Tibial artery (tissue), 4 donors: ENCODE measurements at regions of chr5 and their contacts with region 1.

Region 1: DNA sequence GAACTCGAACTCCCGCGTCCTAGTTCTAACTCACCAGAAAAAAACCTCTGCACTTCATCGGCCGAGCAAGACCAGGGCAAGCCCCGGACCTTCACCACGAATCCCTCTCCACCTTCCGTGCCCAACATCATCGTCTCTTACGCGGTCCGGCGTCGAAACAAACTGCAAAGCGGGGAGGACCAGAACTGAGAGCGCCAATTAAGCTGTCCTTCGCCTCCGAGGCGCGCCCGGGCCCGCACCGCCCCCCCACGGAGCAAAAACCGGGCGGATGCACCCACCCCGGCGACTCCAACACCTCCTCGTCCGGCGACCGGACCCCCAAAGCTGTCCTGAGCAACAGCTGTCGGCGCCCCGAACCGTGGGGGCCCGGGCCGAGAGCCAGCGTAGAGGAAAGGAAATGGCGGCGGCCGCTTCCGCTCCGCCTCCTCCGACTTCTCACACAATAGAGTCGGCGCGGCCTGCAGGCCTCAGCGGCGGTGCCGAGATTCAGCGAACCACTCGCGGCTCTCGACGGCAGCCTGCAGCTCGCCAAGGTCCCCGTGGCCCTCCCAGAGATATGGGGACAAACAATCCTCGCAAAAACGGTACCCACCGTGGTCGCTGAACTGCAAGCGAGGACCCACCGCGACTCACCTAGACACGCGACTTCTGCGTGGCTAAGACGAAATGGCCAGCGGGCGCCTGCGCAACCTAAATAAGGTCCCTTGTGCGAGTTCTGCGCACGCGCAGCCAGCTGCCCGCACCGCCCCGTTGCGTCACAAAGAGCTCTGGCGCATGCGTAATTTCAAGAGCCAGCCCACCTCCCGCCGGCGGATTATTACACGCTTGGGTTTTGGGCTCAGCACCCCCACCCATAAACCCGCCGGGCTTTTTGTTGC is at the start of gene HNRNPH1:
- DNase-seq: peak; percentile 97 to 99
- H3K4me3 ChIP-seq: peak within 1 kb of the TSS; percentile 94 to 99
- H3K27ac ChIP-seq: peak within 1 kb of the TSS; percentile 99 to 100
- H3K4me1 ChIP-seq: peaks cover 0 to 54% (median 44%) of the 10 kb centered on the region in 4 donors
- H3K27me3 ChIP-seq: no peaks in the 10 kb centered on the region
- CTCF ChIP-seq: no peak

Region 2: DNA sequence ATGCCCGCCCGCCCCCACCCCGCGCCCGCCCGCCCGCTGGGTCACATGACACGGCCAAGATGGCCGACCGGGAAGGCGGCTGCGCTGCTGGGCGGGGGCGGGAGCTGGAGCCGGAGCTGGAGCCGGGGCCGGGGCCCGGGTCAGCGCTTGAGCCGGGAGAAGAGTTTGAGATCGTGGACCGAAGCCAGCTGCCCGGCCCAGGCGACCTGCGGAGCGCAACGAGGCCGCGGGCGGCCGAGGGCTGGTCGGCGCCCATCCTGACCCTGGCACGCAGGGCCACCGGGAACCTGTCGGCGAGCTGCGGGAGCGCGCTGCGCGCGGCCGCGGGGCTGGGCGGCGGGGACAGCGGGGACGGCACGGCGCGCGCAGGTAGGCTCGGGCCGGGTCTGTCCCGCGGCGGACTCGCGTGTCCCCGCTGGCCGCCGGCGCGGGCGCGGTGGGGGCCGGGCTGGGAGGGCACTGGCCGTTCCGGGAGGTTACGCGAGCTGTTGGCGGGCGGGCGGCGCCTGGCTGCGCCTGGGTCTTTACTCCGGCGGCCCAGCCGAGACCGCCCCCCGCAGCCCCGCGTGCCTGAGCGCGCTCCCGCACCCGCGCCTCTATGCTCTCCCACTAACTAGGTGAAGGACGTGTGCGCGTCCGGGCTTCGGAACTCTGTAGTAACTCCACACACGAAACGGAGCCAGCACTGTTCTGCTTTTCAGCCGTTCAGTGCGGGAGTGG is 72.6 kb before region 1 on chr5 and contains the start of gene RUFY1:
- intact Hi-C with region 1: loop called (anchors 5 kb)
- DNase-seq: peak; percentile 70 to 88
- H3K4me3 ChIP-seq: peak within 1 kb of the TSS; percentile 68 to 97
- H3K27ac ChIP-seq: peak within 1 kb of the TSS; percentile 82 to 96
- H3K4me1 ChIP-seq: peaks cover 0 to 32% (median 23%) of the 10 kb centered on the region in 4 donors
- H3K27me3 ChIP-seq: no peaks in the 10 kb centered on the region
- CTCF ChIP-seq: peak in 1 of 2 experiments; percentile 36

Region 3: GRCh38 chr5:179678223-179679013 is 55.2 kb after region 1 on chr5:
- intact Hi-C with region 1: loop called (anchors 10 kb)
- DNase-seq: peak; percentile 93 to 96
- H3K4me3 ChIP-seq: peak overlapping the region; percentile 68 to 71
- H3K27ac ChIP-seq: peak overlapping the region; percentile 83 to 88
- H3K4me1 ChIP-seq: peaks cover 0 to 23% (median 15%) of the 10 kb centered on the region in 4 donors
- H3K27me3 ChIP-seq: no peaks in the 10 kb centered on the region
- CTCF ChIP-seq: no peak

Region 4: DNA sequence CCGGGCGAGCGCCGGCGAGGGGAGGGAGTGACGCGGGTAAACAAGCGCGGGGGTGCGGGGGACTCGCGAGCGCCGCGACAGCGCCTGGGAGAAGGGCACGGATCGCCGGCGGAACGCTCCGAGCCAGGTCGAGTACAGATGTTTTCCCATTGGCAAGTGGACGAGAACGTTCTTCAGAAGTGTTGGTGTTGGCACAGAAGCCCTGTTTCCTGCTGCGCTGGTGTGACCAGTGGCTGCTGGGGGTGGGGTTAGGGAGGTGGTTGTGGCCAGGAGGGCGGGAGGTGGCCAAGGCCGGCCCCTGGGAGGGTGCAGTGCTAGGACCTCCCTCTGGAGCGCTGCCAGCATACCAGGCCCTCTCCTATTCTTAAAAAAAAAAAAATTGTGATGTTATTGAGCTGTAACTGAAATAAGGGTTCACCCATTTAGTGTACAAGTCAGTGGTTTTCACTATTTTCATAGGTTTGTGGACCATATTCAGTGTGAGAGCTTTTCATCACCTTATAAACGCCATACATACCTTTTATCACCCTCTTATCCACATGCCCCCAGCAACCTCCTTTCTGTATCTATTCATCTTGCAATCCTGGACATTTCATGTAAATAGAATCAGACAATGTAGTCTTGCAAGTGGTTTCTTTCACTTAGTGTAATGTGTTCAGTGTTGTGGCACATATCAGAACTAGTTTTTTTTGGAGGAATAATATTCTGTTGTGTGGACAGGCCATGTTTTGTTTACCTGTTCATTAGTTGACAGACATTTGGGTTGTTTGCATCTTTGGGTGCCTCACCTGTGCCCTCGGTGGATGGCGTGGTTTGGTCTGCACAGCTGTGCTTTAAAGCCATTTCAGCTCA is 198.6 kb after region 1 on chr5:
- intact Hi-C with region 1: loop called (anchors 5 kb)
- DNase-seq: peak; percentile 98 to 99
- H3K4me3 ChIP-seq: peak overlapping the region; percentile 99 to 100
- H3K27ac ChIP-seq: peak overlapping the region; percentile 100
- H3K4me1 ChIP-seq: peaks cover 10 to 85% (median 71%) of the 10 kb centered on the region in 4 donors
- H3K27me3 ChIP-seq: no peaks in the 10 kb centered on the region
- CTCF ChIP-seq: no peak